ENCODE measurements at regions of chr9 and their contacts with region 1.

Region 1: DNA sequence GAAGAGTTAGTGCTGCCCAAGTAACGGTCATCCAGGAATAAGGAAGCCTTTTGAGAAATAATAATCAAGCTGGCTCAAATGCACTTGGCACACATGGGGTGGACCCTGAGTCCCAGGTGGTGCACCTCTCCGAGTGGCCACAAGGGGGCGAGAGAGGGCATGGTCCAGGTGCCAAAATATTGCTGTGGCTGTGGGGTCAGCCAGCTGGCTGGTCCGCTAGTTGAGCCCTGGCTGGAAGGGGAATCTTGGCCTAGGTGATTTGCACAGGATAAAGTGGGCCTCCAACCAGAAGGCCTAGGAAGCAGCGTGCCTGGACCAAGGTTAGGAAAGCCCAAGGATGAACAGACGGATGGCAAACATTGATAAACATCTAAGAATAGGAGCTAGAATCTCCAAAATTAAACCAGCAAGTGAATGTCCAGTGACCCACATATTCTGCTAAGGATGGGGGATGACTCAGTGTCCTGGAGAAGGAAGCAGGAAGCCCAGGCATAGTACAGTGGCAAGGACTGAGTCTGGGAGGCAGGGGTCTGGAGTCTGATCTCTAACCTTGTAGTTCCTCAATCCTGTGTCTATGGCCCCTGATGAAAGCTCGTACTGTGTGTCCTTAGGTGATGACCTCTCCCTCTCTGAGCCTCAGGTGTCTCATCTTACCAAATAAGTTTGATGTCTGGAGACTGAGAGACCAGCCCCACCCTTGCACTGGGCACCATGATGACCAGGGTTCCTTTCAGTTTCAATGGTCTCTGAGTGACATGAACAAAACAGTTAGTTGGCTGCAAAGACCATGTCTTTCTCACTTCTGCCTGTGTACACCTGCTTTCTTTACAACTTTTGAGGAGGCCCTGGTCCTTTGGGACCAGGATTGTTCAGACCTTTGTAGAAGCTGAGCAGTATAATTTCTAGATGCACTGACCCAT is 19.2 kb upstream of the SHB start:
- DNase-seq: no peak
- ATAC-seq: peak; percentile 70
- H3K4me3 ChIP-seq: no peak overlapping the region
- H3K27ac ChIP-seq: peak overlapping the region; percentile 13; the same call in 1 of the 2 replicates
- H3K4me1 ChIP-seq: peaks cover 37% of the 10 kb centered on the region
- H3K27me3 ChIP-seq: no peaks in the 10 kb centered on the region
- CTCF ChIP-seq: peak; percentile 86 to 98 (median 97)
- EP300 ChIP-seq: no peak
- POLR2A ChIP-seq: no peak
- RAD21 ChIP-seq: peak; percentile 90

Region 2: DNA sequence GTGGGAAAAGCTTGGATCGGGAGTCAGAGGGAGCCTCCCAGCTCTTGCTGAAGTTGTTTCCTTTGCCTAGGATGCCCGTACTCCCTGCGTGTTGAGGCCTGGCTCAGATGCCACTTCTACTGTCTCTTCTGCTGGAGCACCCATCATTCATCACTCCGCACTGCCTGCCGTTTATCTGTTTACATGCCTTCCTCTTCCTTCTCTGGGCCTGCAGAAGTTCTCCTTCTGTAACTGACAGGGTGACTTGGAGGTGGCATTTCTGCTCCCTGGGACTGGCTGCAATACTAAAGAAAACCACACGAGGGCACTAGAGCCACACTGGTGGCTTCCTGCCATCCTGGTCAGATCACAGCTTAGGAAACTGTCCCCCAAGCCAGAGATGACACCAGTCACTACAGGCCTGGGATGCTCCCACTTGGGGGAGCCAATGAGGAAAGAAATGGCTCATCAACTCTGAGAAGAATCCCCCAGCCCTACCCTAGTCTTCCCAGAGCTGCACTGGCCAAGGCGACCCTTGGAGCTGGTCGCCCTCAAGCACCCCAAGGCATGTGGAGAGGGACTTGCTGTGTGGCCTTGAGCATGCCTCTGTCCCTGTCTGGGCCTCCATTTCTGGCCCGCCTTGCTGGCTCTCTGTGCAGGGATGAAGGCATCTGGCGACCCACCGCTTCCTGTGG is 174.6 kb before region 1 on chr9:
- CTCF ChIA-PET with region 1: interaction called, 76 read pairs
- POLR2A ChIA-PET with region 1: no interaction called
- RAD21 ChIA-PET with region 1: interaction called, 44 read pairs
- SMC1A ChIA-PET with region 1: interaction called, 64 read pairs
- in situ Hi-C with region 1: no loop called
- intact Hi-C with region 1: loop called (anchors 1 kb)
- DNase-seq: peak; percentile 47
- ATAC-seq: peak; percentile 93
- H3K4me3 ChIP-seq: no peak overlapping the region
- H3K27ac ChIP-seq: no peak overlapping the region
- H3K4me1 ChIP-seq: no peaks in the 10 kb centered on the region; the same call in 1 of the 2 replicates
- H3K27me3 ChIP-seq: no peaks in the 10 kb centered on the region
- CTCF ChIP-seq: peak; percentile 96 to 98 (median 97)
- EP300 ChIP-seq: no peak
- POLR2A ChIP-seq: no peak
- RAD21 ChIP-seq: peak; percentile 97

Region 3: DNA sequence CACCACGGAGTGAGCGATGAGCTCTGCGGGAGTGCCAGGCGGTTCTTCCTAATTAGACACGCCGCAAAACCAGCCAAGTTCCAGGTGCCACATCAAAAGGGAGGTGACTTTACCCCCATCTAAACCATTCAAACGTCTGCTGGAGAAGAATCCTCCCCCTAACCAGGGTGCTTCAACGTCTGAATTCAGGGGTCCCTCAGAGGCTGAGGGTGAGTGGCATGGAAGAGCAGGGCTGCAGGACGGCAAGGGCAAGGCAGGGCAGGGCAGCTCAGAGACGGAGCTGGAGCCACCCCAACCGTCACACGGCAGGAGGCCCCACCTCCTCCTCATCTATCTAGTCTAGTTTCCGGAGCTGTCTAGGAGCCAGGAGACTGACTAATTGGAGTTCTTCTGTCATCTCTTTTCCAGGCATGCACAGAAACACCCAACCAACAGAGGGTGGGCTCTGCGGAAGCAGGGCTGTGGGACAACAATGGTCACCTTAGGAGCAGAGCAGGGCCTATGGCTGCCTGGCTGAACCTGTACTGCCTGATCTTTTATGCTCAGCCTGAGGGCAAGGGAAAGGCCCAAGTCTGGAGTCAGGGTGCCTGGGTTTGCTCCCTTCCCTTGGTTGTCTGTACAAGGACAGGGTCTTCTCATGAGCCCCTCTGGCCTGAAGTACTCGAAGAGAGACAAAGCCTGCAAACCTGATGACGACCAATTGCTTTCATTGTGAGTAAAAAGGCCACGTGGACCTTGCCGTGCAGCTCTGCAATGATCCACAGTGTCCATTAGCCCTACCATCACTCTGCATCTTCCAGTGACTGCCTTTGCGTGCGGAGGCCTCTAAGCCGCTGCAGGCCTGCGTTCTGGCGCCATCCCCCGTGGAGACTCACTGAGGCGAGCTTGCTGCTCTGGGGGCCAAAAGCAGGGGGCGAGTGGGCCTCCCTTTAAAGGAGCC is 103.3 kb before region 1 on chr9:
- CTCF ChIA-PET with region 1: no interaction called
- POLR2A ChIA-PET with region 1: no interaction called
- RAD21 ChIA-PET with region 1: no interaction called
- SMC1A ChIA-PET with region 1: no interaction called
- in situ Hi-C with region 1: no loop called
- intact Hi-C with region 1: no loop called
- DNase-seq: no peak
- ATAC-seq: no peak
- H3K4me3 ChIP-seq: no peak overlapping the region
- H3K27ac ChIP-seq: no peak overlapping the region
- H3K4me1 ChIP-seq: no peaks in the 10 kb centered on the region
- H3K27me3 ChIP-seq: no peaks in the 10 kb centered on the region
- CTCF ChIP-seq: no peak
- EP300 ChIP-seq: no peak
- POLR2A ChIP-seq: no peak
- RAD21 ChIP-seq: no peak

Region 4: DNA sequence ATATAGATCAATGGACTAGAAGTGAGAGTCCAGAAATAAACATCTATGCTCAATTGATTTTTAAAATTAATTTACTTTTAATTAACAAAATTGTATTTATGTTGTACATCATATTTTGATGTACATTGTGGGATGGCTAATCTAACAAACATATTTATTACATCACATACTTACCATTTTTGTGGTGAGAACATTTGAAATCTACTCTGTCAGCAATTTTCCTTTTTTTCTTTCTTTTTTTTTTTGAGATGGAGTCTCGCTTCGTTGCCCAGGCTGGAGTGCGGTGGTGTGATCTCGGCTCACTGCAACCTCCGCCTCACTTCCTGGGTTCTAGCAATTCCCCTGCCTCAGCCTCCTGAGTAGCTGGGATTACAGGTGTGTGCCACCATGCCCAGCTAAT is 13.2 kb after region 1 on chr9:
- CTCF ChIA-PET with region 1: interaction called, 148 read pairs
- POLR2A ChIA-PET with region 1: interaction called, 96 read pairs
- RAD21 ChIA-PET with region 1: interaction called, 205 read pairs
- SMC1A ChIA-PET with region 1: interaction called, 359 read pairs
- in situ Hi-C with region 1: no loop called
- intact Hi-C with region 1: loop called (anchors 2 kb)
- DNase-seq: no peak
- ATAC-seq: no peak
- H3K4me3 ChIP-seq: no peak overlapping the region
- H3K27ac ChIP-seq: no peak overlapping the region
- H3K4me1 ChIP-seq: no peaks in the 10 kb centered on the region
- H3K27me3 ChIP-seq: no peaks in the 10 kb centered on the region
- CTCF ChIP-seq: no peak
- EP300 ChIP-seq: no peak
- POLR2A ChIP-seq: no peak
- RAD21 ChIP-seq: no peak

Region 5: GRCh38 chr9:38133595-38133994 is 45.3 kb after region 1 on chr9:
- CTCF ChIA-PET with region 1: interaction called, 116 read pairs
- POLR2A ChIA-PET with region 1: interaction called, 4 read pairs
- RAD21 ChIA-PET with region 1: interaction called, 37 read pairs
- SMC1A ChIA-PET with region 1: interaction called, 106 read pairs
- in situ Hi-C with region 1: no loop called
- intact Hi-C with region 1: loop called (anchors 2 kb)
- DNase-seq: no peak
- ATAC-seq: no peak
- H3K4me3 ChIP-seq: no peak overlapping the region
- H3K27ac ChIP-seq: no peak overlapping the region
- H3K4me1 ChIP-seq: peaks cover 3% of the 10 kb centered on the region; the same call in 1 of the 2 replicates
- H3K27me3 ChIP-seq: peaks cover 0 to 2% of the 10 kb centered on the region in 2 experiments; a peak in 3 of 4 replicates
- CTCF ChIP-seq: no peak
- EP300 ChIP-seq: no peak
- POLR2A ChIP-seq: no peak
- RAD21 ChIP-seq: peak; percentile 29; the same call in 1 of the 2 replicates

Region 6: DNA sequence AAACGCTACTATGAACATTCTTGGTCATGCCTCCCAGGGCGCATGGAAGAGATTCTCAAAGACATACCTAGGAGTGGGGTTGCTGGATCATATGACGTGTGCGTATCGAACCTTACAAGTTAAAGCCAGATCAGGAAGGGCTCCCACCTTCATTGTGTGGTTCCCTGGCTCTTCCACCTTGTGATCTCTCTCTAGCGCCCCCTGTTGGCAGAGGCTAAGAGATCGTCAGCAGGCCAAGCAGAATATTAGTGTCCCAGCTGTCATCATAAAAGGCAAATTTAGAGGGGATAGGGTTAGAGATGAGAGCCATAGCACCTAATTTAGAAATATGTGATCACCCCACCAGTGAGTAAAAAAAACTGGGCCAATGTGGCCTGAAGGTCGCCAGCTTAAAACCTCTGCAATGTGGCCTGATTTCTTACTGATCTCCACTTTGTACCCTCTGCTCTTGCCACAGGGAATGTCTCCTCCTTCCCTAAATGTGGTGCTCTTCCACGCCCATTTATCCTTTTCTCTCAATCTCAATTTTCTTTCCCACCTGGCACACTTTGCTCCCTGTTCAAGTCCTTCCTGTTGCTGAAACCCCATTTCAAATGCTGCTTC is 72.4 kb after region 1 on chr9:
- CTCF ChIA-PET with region 1: interaction called, 243 read pairs
- POLR2A ChIA-PET with region 1: interaction called, 6 read pairs
- RAD21 ChIA-PET with region 1: interaction called, 162 read pairs
- SMC1A ChIA-PET with region 1: interaction called, 169 read pairs
- in situ Hi-C with region 1: no loop called
- intact Hi-C with region 1: loop called (anchors 2 kb)
- DNase-seq: no peak
- ATAC-seq: peak; percentile 89
- H3K4me3 ChIP-seq: no peak overlapping the region
- H3K27ac ChIP-seq: no peak overlapping the region
- H3K4me1 ChIP-seq: no peaks in the 10 kb centered on the region; the same call in 1 of the 2 replicates
- H3K27me3 ChIP-seq: no peaks in the 10 kb centered on the region
- CTCF ChIP-seq: peak; percentile 62 to 90 (median 86)
- EP300 ChIP-seq: no peak
- POLR2A ChIP-seq: no peak
- RAD21 ChIP-seq: peak; percentile 75

Region 7: DNA sequence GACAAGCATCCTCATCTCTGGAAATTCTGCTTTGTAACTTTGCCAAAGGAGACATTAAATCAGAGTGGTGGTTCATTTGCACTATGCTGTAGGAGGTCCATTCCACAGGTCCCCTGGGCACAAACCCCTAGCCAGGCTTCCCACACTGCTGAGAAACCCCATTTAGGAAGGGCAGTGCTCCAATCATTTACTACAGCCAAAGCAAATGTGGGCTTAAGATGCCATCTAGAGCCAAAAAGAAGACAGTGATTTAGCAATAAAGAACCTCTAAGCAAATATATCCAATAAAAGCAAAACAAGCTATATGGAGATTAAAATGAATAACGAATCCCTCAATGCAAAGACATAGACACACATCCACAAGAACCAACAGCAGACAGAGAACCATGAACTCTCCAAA is 175.3 kb after region 1 on chr9:
- CTCF ChIA-PET with region 1: interaction called, 68 read pairs
- POLR2A ChIA-PET with region 1: interaction called, 3 read pairs
- RAD21 ChIA-PET with region 1: interaction called, 38 read pairs
- SMC1A ChIA-PET with region 1: interaction called, 49 read pairs
- in situ Hi-C with region 1: no loop called
- intact Hi-C with region 1: loop called (anchors 5 kb)
- DNase-seq: no peak
- ATAC-seq: peak; percentile 29; the same call in 1 of the 3 replicates
- H3K4me3 ChIP-seq: no peak overlapping the region
- H3K27ac ChIP-seq: no peak overlapping the region
- H3K4me1 ChIP-seq: no peaks in the 10 kb centered on the region
- H3K27me3 ChIP-seq: no peaks in the 10 kb centered on the region
- CTCF ChIP-seq: peak in 1 of 3 experiments; percentile 34; a peak in 1 of 6 replicates
- EP300 ChIP-seq: no peak
- POLR2A ChIP-seq: no peak
- RAD21 ChIP-seq: peak; percentile 70

Region 8: GRCh38 chr9:38405785-38406184 is 317.5 kb after region 1 on chr9:
- CTCF ChIA-PET with region 1: interaction called, 3 read pairs
- POLR2A ChIA-PET with region 1: no interaction called
- RAD21 ChIA-PET with region 1: no interaction called
- SMC1A ChIA-PET with region 1: interaction called, 3 read pairs
- in situ Hi-C with region 1: no loop called
- intact Hi-C with region 1: loop called (anchors 2 kb)
- DNase-seq: no peak
- ATAC-seq: no peak
- H3K4me3 ChIP-seq: no peak overlapping the region
- H3K27ac ChIP-seq: no peak overlapping the region
- H3K4me1 ChIP-seq: peaks cover 3% of the 10 kb centered on the region; the same call in 1 of the 2 replicates
- H3K27me3 ChIP-seq: no peaks in the 10 kb centered on the region; a peak in 3 of 4 replicates
- CTCF ChIP-seq: no peak
- EP300 ChIP-seq: no peak
- POLR2A ChIP-seq: no peak
- RAD21 ChIP-seq: no peak

Measured in GM12878 (cell line).